Breast epithelium (tissue), 4 donors: ENCODE measurements at regions of chr10 and their contacts with region 1.

Region 1: GRCh38 chr10:23717913-23718312 is 279.0 kb downstream of the OTUD1 start:
- DNase-seq: no peak
- H3K4me3 ChIP-seq: no peak overlapping the region
- H3K27ac ChIP-seq: no peak overlapping the region
- H3K4me1 ChIP-seq: no peaks in the 10 kb centered on the region
- H3K27me3 ChIP-seq: no peaks in the 10 kb centered on the region
- CTCF ChIP-seq: no peak
- POLR2A ChIP-seq: no peak

Region 2: DNA sequence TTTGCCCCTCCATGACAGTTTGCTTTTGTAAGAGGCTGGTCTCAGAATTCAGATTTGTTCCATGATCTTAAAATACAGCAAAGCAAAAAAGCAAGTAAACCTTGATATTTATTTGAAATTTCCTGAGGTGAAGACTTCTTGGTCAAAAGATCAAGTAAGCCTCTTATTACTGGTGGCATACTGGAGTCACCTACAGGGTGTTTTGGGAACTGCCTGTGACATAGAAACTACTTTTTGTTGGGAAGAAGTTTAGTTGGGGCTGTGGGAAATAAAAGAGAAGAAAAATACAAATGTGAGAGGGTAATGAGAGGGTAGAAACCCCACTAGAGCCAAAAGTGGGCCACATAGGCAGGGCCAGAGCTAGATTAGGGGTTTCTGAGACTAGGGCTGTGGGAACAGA is 61.2 kb before region 1 on chr10:
- intact Hi-C with region 1: loop called (anchors 2 kb)
- DNase-seq: no peak
- H3K4me3 ChIP-seq: no peak overlapping the region
- H3K27ac ChIP-seq: no peak overlapping the region
- H3K4me1 ChIP-seq: no peaks in the 10 kb centered on the region
- H3K27me3 ChIP-seq: peaks cover 0 to 11% of the 10 kb centered on the region in 2 donors
- CTCF ChIP-seq: peak in 1 of 3 donors; percentile 13
- POLR2A ChIP-seq: no peak

Region 3: DNA sequence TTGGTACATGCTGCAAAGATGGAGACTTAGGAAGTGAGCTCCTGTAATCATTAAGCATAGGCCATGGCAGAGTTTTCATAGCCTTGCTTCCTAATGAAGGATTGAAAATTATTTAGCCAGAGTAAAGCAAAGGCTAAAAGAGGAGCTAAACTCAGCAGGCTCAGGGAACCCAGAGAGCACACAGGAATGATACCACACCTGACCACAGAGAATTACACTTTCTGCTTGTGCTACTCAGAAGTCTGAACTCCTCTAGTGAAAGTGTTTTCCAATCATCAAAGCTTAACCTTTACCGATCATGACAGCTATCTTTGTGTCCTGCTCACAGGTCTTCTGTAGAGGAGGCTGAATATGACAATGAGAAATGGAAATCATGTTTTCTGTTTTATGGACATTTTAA is 68.7 kb after region 1 on chr10:
- intact Hi-C with region 1: no loop called
- DNase-seq: no peak
- H3K4me3 ChIP-seq: no peak overlapping the region
- H3K27ac ChIP-seq: no peak overlapping the region
- H3K4me1 ChIP-seq: no peaks in the 10 kb centered on the region
- H3K27me3 ChIP-seq: no peaks in the 10 kb centered on the region
- CTCF ChIP-seq: no peak
- POLR2A ChIP-seq: no peak